ENCODE measurements at regions of chr1 and their contacts with region 1.

Region 1: DNA sequence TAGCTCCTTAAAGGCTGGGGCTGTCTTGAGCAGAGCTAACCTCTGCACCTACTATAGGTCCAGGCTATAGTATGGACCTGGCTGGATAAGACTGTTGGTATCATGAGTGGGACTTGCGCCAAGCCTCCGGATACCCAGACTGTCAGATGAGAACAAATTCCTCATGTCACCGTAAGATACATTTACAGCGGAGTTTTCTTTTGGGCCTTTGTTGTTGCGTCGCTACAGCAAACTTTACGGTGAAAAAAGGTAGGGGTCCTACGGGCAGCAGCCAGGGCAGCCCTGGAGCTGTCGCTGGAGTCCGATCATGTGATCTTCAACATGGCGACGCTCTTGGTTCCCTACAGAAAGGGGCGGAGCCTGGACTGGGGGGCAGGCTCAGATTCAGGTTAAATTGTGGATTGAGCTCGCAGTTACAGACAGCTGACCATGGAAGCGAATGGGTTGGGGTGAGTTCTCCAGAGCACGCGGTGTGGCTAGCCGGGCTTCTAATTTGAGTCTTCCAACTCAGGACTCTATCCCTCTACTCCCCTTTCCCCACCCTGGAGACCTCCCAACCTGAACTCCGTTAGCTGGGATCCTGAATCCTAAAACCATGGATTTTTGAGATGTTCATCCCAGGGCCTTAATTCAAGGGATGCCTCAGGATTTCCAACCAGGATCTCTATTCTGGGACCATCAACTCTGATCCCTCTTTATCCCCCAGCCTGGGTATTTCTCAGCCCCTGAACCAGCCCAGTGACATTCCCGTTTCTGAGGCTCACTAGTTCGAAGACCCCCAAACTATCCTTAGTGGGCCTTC is at the start of gene UROD:
- DNase-seq: peak; percentile 84 to 97 (median 94)
- H3K4me3 ChIP-seq: peak within 1 kb of the TSS; percentile 64 to 100 (median 97)
- H3K27ac ChIP-seq: peak within 1 kb of the TSS; percentile 52 to 94 (median 85)
- H3K27me3 ChIP-seq: no peaks in the 10 kb centered on the region
- CTCF ChIP-seq: peak in 39 of 56 donors; percentile 3 to 62 (median 35)
- total RNA-seq, gene UROD: 53.7 to 114 (median 90.3) TPM

Region 2: DNA sequence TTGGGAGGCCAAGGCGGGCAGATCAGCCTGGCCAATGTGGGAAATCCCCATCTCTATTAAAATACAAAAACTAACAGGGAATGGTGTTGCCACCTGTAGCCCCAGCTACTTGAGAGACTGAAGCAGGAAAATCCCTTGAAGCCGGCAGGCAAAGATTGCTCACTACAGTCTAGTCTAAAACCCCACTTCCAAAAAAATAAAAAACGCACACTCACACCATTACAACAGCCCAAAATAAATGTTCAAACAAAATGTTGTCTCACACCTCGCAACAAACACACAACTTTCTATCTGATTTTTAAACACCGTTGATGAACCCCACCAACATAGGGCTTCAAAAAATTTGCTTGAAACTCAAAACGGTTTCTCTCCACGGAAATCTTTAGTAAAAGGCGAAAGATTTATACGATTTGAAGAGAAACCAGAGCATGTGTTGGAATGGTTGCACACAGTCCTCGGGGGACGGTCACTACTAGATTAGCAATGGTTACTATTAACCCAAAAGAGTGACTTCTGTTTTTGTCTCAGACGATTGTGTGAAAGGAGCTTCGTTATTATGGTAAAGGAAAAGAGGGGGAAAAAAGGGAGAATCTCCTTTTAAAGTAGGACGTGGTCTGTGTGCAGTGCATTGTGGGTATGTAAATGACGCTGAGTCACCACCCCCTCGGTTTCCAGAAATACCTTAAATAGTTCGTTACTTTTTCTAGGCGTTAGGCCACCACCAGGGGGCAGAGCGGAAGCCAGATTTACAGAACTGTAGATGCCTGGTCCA is 281.1 kb before region 1 on chr1 and contains the start of gene RNU5D-1:
- intact Hi-C with region 1: loop called (anchors 5 to 10 kb)
- DNase-seq: peak; percentile 83 to 99 (median 94)
- H3K4me3 ChIP-seq: peak within 1 kb of the TSS in 58 of 59 donors; percentile 11 to 62 (median 44)
- H3K27ac ChIP-seq: peak within 1 kb of the TSS; percentile 78 to 99 (median 96)
- H3K27me3 ChIP-seq: no peaks in the 10 kb centered on the region
- CTCF ChIP-seq: peak; percentile 72 to 97 (median 84)
- total RNA-seq, gene RNU5D-1: not detected

Region 3: GRCh38 chr1:44848456-44849181 is 163.4 kb before region 1 on chr1:
- intact Hi-C with region 1: no loop called
- DNase-seq: peak in 3 of 10 donors; percentile 28 to 54 (median 40)
- H3K4me3 ChIP-seq: no peak overlapping the region
- H3K27ac ChIP-seq: peak overlapping the region in 54 of 59 donors; percentile 5 to 86 (median 68)
- H3K27me3 ChIP-seq: no peaks in the 10 kb centered on the region
- CTCF ChIP-seq: no peak

Region 4: DNA sequence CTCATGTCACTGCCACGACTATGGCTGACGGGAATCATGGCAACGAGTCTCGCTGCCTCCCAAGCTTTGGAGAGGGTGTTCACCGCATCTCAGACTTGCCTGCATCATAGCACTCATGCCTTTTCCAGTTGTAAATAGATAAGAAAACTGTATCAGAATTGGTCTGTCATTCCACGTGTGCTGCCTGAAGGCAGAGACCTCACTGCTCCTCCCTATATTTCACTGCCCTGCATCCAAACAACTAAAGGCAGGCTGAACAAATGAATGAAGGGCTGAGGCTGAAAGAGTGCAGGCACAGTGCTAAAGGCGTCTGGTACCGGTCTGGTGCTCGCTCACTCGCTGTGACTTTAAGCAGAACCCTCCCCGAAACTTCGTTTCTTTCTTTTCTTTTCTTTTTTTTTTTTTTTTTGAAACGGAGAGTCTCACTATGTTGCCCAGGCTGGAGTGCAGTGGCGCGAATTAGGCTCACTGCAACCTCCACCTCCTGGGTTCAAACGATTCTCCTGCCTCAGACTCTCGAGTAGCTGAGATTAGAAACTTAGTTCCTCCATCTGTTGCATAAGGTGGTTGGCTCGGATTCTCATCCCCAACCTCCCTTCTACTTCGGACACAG is 26.2 kb before region 1 on chr1:
- intact Hi-C with region 1: loop called in 1 of 2 experiments (anchors 2 kb)
- DNase-seq: no peak
- H3K4me3 ChIP-seq: peak overlapping the region; percentile 60 to 99 (median 86)
- H3K27ac ChIP-seq: peak overlapping the region in 35 of 59 donors; percentile 10 to 79 (median 47)
- H3K27me3 ChIP-seq: no peaks in the 10 kb centered on the region
- CTCF ChIP-seq: no peak

Region 5: DNA sequence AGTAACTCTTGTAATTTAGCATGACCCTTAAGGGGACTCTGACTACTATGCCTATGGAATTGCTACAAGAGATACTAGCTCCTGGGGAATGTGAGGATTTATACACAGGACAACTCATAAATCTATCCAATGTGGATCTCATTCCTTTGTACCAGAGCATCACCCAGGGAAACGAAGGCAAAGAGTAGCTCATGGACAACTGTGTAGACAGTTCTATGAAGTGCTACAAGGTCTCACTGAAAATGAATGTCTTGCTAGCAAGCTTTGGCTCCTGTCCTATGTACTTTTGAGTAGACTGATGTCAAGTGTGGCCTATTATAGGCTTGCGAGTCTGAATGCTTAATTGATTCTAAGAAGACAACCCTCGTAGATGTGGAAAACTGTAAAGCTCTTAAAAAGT is 100.6 kb after region 1 on chr1:
- intact Hi-C with region 1: no loop called
- DNase-seq: no peak
- H3K4me3 ChIP-seq: no peak overlapping the region
- H3K27ac ChIP-seq: no peak overlapping the region
- H3K27me3 ChIP-seq: no peaks in the 10 kb centered on the region
- CTCF ChIP-seq: no peak

Region 6: GRCh38 chr1:45303582-45304310 is 291.7 kb after region 1 on chr1:
- intact Hi-C with region 1: loop called (anchors 1 kb)
- DNase-seq: peak; percentile 93 to 99 (median 97)
- H3K4me3 ChIP-seq: peak overlapping the region; percentile 48 to 99 (median 87)
- H3K27ac ChIP-seq: peak overlapping the region; percentile 23 to 97 (median 93)
- H3K27me3 ChIP-seq: no peaks in the 10 kb centered on the region
- CTCF ChIP-seq: peak; percentile 38 to 94 (median 81)

Region 7: DNA sequence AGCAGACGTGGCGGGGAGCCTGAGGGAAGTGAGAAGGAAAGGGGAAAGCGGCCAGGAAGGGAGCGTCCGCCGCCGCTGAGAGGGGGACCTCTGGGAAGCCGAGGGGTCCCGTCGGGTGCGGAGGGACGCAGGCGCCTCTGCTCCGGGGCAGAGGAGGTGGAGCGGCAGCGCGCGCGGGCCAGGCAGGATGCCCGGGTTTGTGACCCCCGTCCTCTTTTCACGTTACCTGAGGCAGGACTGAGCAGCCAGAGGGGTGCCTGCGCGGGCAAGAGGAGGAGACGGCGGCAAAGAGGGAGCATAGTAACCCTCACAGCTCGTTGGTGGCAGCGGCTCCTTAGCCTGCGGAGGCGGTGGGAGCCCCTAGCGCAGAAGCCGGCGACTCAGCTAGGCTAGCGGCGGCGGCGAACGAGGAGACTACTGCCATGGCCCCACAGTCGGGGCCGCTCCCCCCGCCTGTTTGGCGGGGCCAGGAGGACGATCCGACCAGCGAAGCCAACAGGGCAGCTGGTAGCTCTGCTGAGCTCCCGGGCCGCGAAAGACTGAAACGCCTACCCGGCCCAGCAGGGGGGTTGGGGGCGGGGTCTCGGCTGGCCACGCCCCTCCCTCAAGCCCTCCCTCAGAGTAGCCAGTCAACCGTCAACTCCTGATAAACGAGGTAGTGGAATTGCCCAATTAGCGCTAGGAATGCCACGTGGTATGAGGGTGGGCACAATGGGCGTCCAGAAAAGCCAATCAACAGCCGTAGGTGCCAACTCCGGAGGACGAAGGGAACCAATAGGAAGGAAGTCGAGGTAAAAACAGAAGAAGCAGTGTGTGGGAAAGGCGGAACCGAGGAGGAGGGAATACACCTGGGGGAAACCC is 478.8 kb after region 1 on chr1 and contains the start of gene TESK2:
- intact Hi-C with region 1: loop called (anchors 2 to 5 kb)
- DNase-seq: peak; percentile 96 to 99 (median 98)
- H3K4me3 ChIP-seq: peak within 1 kb of the TSS; percentile 68 to 100 (median 94)
- H3K27ac ChIP-seq: peak within 1 kb of the TSS; percentile 18 to 96 (median 89)
- H3K27me3 ChIP-seq: no peaks in the 10 kb centered on the region
- CTCF ChIP-seq: peak in 36 of 56 donors; percentile 2 to 56 (median 34)
- total RNA-seq, gene TESK2: 4.1 to 32.6 (median 11.2) TPM

Region 8: DNA sequence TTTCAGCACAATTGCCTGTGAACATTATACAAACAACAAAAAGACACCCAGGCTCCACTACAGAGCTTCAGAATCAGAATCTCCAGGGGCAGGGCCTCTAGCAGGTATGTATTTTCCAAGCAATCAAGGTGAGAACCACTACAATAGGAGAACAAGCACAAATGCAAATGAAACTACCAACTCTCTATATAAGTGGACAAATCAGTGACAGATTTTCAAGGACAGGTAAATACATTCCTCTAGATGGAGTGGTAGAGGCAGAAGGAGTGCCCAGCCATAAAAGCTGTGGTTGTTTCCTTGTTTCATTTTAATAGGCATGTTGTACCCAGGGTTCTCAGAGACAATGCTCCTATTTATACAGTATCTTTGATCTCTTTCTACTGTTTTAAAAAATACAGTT is 631.9 kb after region 1 on chr1:
- intact Hi-C with region 1: no loop called
- DNase-seq: no peak
- H3K4me3 ChIP-seq: peak overlapping the region in 1 of 59 donors; percentile 9
- H3K27ac ChIP-seq: peak overlapping the region in 54 of 59 donors; percentile 0 to 86 (median 70)
- H3K27me3 ChIP-seq: no peaks in the 10 kb centered on the region
- CTCF ChIP-seq: peak in 13 of 56 donors; percentile 8 to 32 (median 17)